ENCODE measurements at regions of chr9 and their contacts with region 1.

Region 1: GRCh38 chr9:68704814-68705530 is at the start of gene PIP5K1B:
- DNase-seq: peak; percentile 86
- ATAC-seq: peak; percentile 90
- total RNA-seq, gene PIP5K1B: 85.3 TPM

Region 2: GRCh38 chr9:68779558-68780384 is 74.8 kb after region 1 on chr9:
- intact Hi-C with region 1: loop called (anchors 2 kb)
- DNase-seq: peak; percentile 96
- ATAC-seq: peak; percentile 95

Region 3: GRCh38 chr9:68999393-69000105 is 294.6 kb after region 1 on chr9:
- intact Hi-C with region 1: loop called (anchors 10 kb)
- DNase-seq: peak; percentile 37
- ATAC-seq: peak; percentile 95